Cardiac septum (tissue), 1 donor: ENCODE measurements at regions of chr13 and their contacts with region 1.

Region 1: DNA sequence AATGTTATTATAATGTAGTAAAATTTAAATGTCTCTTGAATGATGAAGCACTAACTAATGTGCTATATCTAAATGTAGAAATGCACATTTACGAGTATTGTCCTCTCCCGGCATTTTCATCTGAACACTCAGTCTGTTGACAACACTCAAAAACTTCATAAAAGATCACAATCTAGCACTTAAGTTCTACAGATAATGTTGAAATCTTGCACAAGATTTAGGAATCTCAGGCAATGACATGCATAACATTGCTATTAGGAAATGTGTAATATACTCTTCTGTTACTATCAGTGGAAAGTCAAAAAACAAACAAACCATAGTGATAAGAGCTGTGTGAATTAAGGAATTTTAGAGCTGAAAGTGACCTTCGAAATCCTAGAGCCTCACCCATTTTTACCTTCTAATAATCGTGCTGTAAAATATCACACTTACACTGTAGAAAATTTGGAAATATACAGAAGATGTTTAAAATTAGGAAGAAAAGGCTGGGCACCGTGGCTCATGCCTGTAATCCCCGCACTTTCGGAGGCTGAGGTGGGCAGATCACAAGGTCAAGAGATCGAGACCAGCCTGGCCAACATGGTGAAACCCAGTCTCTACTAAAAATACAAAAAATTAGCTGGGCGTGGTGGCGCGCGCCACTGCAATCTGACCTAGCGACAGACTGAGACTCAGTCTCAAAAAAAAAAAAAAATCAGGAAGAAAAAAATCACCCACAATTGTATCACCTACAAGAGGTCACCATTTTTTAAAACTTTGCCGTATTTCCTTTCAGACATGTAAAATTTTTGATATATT is 37.7 kb upstream of the XPO4 start:
- DNase-seq: no peak

Region 2: GRCh38 chr13:21060987-21061763 is 120.9 kb after region 1 on chr13 and contains the start of gene LATS2:
- intact Hi-C with region 1: loop called (anchors 5 kb)
- DNase-seq: peak; percentile 99
- total RNA-seq, gene LATS2: 27.8 TPM

Region 3: GRCh38 chr13:21130116-21130515 is 189.8 kb after region 1 on chr13:
- intact Hi-C with region 1: loop called (anchors 5 kb)
- DNase-seq: no peak

Region 4: GRCh38 chr13:21181671-21182070 is 241.4 kb after region 1 on chr13:
- intact Hi-C with region 1: loop called (anchors 2 kb)
- DNase-seq: no peak

Region 5: GRCh38 chr13:21476893-21477472 is 536.7 kb after region 1 on chr13:
- intact Hi-C with region 1: loop called (anchors 5 kb)
- DNase-seq: peak; percentile 86